Adrenal gland (tissue), 19 donors: ENCODE measurements at regions of chr7 and their contacts with region 1.

Region 1: DNA sequence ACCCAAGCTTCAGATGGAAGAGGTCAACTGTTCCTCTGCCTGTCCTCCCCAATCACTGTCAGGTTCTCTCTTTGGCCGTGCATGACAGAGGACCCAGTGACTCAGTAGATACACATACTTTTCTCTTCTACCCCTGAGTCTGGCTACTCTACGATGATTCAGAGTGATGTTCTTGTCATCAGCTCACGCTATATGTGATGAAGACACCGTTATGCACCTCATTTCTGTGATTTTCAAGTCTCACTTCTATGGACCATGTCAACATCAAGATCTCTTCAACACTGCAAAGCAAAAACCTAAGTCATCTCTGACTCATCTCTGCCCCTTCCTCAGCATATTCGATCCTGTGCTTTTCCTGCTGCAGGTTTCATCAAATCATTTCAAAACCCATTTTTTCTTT is 76.6 kb upstream of the DGKI start:
- DNase-seq: no peak
- H3K4me3 ChIP-seq: no peak overlapping the region
- H3K27ac ChIP-seq: no peak overlapping the region
- H3K4me1 ChIP-seq: peaks cover 9 to 37% of the 10 kb centered on the region in 2 donors
- H3K27me3 ChIP-seq: no peaks in the 10 kb centered on the region
- CTCF ChIP-seq: no peak
- POLR2A ChIP-seq: no peak

Region 2: DNA sequence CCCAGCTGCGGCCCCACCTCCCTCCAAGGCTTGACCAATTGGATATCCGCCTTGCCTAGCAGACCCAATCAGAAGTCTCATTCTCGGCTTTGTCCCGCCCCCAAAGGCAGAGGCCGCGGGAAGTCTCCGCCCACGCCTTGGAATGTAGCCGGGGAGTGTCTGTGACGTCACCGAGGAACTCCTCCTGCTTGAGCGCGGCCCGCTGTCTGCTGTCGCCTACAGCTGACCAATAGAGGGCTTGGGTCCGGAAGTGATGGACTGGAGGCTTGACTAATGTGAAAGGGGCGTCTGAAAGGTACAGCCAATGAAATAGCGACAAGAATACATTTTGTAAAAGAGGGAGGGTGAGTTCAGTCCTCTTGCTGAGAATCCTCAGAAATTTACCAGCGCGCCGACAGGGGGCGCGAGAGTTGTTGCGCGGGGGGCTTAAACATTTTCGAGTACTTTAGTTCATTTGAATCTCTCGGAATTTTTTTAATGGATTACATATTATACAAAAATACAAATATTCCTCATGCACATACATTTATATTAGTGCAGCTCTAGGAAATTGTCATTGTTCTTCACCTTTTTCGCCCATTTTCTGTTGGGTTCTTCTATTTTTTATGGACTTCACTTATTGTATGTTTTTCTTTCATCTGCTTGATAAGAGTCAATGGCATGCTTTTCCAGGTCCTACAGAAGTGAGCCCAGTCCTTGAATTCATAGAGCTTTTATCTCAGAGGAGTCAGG is 78.9 kb after region 1 on chr7:
- intact Hi-C with region 1: loop called in 1 of 2 experiments (anchors 5 kb)
- DNase-seq: peak; percentile 99 to 100 (median 100)
- H3K4me3 ChIP-seq: peak overlapping the region; percentile 51 to 89 (median 73)
- H3K27ac ChIP-seq: peak overlapping the region; percentile 57 to 95 (median 91)
- H3K4me1 ChIP-seq: peaks cover 16 to 26% of the 10 kb centered on the region in 2 donors
- H3K27me3 ChIP-seq: no peaks in the 10 kb centered on the region
- CTCF ChIP-seq: peak; percentile 83 to 93 (median 90)
- POLR2A ChIP-seq: no peak